Dorsolateral prefrontal cortex (tissue), 120 donors: ENCODE measurements at regions of chr12 and their contacts with region 1.

Region 1: DNA sequence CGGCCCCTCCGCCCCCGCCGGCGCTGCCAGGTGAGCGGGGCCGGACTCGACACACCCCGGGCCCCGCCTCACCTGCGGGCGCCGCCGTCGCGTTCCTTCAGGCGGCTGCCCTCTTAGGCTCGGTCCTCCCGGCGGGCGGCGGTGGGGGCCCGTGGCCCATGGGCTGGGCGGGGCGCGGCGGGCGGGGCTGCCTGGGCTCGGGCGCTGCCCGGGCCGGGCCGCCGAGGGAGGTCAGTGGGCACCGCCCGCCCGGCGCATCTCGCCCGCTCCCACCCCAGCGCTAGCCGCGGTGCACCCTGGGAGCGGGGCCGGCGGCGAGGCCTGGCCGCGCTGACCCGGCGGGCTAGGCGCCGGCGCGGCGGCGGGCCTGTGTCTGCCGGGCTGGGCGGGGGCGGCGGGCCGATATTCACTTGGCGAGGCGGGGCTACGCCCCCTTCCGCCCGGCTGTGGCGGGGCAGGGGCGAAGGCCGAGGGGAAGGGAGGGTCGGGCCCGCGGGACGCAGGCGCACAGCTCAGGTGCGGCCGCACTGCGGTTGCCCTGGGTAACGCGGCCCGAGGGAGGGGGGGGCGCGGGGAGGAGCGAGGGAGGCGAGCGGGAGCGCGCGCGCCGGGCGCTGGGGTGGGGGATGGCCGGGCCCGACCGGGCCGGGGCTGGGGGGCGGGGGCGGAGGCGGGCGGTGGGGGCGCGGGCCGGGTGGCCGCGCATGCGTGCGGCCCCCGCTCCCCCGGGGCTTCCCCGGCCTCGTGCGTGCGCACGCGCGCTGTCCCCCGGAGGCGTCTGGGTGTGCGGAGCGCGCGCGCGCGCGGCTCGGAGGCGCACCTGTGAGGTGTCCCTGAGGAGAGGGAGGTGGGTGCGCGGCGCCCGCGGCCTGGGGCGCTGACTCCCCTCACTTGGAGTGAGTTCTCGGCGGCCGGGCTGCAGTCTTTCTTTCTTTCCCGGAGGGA is at the starts of genes CCDC92 and ZNF664:
- DNase-seq: peak; percentile 76 to 92 (median 85)
- H3K4me3 ChIP-seq: peak within 1 kb of the TSS; percentile 79 to 99 (median 90)
- H3K27ac ChIP-seq: peak within 1 kb of the TSS; percentile 79 to 99 (median 95)
- H3K27me3 ChIP-seq: no peaks in the 10 kb centered on the region
- CTCF ChIP-seq: peak in 4 of 56 donors; percentile 4 to 19 (median 11)
- total RNA-seq, gene CCDC92: 89.7 to 184 (median 138) TPM
- total RNA-seq, gene ZNF664: 82.2 to 211 (median 117) TPM

Region 2: GRCh38 chr12:122752464-122753318 is 1220.0 kb before region 1 on chr12 and contains the start of gene DENR:
- intact Hi-C with region 1: no loop called
- DNase-seq: peak; percentile 92 to 98 (median 96)
- H3K4me3 ChIP-seq: peak within 1 kb of the TSS; percentile 66 to 99 (median 94)
- H3K27ac ChIP-seq: peak within 1 kb of the TSS in 58 of 59 donors; percentile 36 to 97 (median 83)
- H3K27me3 ChIP-seq: no peaks in the 10 kb centered on the region
- CTCF ChIP-seq: peak; percentile 85 to 99 (median 96)
- total RNA-seq, gene DENR: 23.3 to 54.9 (median 38.1) TPM

Region 3: DNA sequence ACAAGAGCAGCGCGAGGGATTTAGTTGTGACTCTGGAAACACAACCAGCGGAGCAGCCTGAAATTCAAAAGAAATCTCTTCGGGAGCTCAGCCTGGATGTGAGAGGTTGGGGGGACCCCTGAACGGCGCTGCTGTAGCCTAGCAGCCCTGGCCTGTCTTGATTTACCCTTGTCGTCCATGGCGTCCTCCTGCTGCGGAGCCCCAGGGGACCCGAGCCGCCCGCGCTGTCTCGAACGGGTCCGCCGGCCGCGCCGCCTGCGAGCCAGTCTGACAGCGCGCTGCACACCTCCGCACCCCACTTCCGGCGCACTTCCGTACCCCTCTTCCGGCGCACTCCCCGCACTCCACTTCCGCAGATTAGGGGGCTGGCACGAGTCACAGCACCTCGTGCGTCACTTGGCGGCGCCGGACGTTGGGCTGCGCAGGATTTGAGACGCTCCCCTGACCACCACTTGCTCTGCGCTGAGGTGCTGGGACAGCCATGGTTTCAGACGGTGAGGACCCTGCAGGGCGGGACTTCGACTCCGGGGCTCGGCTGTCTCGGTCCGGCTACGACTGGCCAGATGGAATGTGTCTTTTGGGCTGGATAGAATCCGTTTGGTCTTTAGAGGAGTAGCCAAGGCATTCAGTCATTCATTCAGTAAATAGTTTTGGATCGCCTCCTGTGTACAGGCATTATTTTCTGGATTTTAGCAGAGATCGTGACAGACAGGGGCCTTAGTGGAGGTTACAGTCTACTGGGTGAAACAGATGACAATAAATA is 339.2 kb before region 1 on chr12 and contains the starts of genes EIF2B1 and GTF2H3:
- intact Hi-C with region 1: loop called in 1 of 2 experiments (anchors 5 kb)
- DNase-seq: peak; percentile 95 to 99 (median 97)
- H3K4me3 ChIP-seq: peak within 1 kb of the TSS; percentile 57 to 100 (median 93)
- H3K27ac ChIP-seq: peak within 1 kb of the TSS; percentile 26 to 93 (median 77)
- H3K27me3 ChIP-seq: no peaks in the 10 kb centered on the region
- CTCF ChIP-seq: peak in 33 of 56 donors; percentile 6 to 55 (median 30)
- total RNA-seq, gene EIF2B1: 31.4 to 56.3 (median 43.6) TPM
- total RNA-seq, gene GTF2H3: 18.5 to 41.9 (median 28.2) TPM

Region 4: GRCh38 chr12:123948796-123949769 is 23.6 kb before region 1 on chr12:
- intact Hi-C with region 1: loop called in 1 of 2 experiments (anchors 2 kb)
- DNase-seq: peak in 1 of 10 donors; percentile 32
- H3K4me3 ChIP-seq: peak overlapping the region in 34 of 59 donors; percentile 0 to 50 (median 18)
- H3K27ac ChIP-seq: peak overlapping the region in 52 of 59 donors; percentile 16 to 89 (median 72)
- H3K27me3 ChIP-seq: no peaks in the 10 kb centered on the region
- CTCF ChIP-seq: peak in 2 of 56 donors; percentile 16 to 27